BJ (cell line): ENCODE measurements at regions of chr18 and their contacts with region 1.

Region 1: DNA sequence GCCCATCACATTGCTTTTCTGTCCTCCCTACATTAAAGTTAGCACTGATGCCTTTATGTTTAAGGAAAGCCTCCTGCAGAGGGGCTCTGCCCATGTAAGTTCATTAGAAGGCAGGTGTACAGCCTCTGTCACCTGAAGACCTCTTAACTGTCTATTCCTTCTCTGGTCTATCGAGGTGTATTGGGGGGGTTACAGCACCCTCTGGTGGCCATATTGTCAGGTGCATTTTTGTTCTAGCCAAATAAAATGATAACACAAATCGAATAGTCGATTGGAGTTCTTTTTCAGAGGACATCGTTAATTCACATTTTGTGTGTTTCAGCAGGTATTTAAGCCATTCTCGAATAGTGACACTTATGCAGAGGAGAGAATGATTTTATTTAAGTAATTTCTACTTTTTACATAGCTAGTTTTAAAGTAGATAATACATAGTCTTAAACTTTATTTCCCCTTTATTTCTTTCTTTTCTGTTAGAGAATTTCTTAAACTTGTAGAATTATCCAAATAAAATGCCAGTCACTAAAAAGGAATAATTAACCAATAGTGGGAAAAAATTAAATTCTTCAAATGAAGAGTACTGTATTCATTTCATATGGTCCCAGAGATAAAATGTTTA is 136.8 kb downstream of the NEDD4L start:
- DNase-seq: no peak
- H3K4me3 ChIP-seq: no peak overlapping the region
- H3K27me3 ChIP-seq: no peaks in the 10 kb centered on the region
- CTCF ChIP-seq: peak; percentile 89

Region 2: GRCh38 chr18:57970356-57971080 is 210.3 kb before region 1 on chr18:
- CTCF ChIA-PET with region 1: no interaction called
- POLR2A ChIA-PET with region 1: no interaction called
- DNase-seq: no peak
- H3K4me3 ChIP-seq: no peak overlapping the region
- H3K27me3 ChIP-seq: peaks cover 1% of the 10 kb centered on the region; the same call in 1 of the 2 replicates
- CTCF ChIP-seq: peak; percentile 30; the same call in 1 of the 2 replicates

Region 3: GRCh38 chr18:58195278-58195765 is 14.5 kb after region 1 on chr18:
- CTCF ChIA-PET with region 1: interaction called, 40 read pairs
- POLR2A ChIA-PET with region 1: interaction called, 3 read pairs
- DNase-seq: no peak
- H3K4me3 ChIP-seq: peak overlapping the region; percentile 47
- H3K27me3 ChIP-seq: no peaks in the 10 kb centered on the region
- CTCF ChIP-seq: no peak

Region 4: DNA sequence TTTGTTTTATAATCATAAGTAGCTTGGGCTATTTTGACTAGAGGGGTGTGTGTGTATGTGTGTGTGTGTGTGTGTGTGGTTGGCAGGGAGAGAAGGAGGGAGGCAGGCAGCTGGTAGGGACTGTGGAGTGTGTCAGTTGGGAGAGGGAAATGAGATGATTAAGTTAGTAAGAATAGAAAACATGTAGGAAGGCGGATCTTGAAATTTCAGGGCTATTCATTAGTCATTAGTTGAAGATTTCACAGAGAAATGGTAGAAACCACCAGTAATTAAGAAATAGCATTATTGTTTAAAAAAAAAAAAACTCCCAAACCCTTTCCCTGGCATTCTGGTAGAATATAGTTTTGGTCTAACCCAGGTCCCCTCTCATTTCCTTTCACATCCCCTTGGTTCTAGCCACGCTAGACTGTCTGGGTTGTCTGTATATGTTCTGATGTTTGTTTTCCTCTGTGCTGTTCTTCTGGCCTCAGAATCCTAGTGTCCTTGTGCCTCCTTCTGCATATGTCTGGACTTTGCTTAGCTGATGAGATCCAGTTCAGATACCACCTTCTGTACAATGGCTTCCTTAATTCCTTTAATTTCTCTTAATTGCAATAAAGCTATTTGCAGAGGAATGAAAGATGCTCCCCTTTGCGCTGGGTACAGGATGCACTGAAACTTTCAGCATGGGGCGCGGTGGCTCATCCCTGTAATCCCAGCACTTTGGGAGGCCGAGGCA is 24.8 kb after region 1 on chr18:
- CTCF ChIA-PET with region 1: interaction called, 13 read pairs
- POLR2A ChIA-PET with region 1: no interaction called
- DNase-seq: peak; percentile 63
- H3K4me3 ChIP-seq: no peak overlapping the region
- H3K27me3 ChIP-seq: no peaks in the 10 kb centered on the region
- CTCF ChIP-seq: no peak